ENCODE measurements at regions of chr19 and their contacts with region 1.

Region 1: DNA sequence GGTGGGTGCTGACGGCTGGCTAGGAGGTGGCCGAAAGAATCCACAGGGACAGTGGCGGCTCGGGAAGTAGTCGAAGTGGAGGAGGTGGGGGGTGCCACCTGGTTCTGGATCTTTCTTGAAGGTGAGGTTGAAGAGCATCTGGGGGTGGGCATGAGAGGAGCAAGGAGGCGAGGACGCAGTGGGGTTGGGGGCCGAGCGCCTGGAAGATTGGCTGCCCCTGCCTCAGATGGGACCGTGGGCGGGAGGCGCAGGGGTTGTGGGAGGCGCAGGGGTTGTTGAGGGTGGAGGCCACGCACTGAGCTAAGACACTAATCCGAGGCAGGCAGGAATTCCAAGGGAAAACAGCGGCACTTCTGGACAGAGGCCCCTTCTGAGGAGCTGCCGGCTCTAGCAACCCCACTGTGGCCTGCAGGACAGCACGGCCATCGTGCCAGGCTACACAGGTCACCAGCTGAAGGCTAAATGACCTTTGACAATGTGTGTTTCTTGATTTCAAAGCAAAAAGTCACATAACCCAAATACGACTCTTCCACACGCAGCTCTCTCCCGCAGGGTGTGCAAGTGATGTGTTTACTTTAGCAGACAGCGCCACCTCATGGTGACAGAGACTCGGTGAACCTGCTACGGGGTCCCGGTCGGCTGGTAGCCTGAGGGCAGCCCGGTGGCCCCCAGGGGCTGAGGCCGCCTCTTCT is 44.1 kb upstream of the RANBP3 start:
- DNase-seq: peak; percentile 70 to 83
- ATAC-seq: peak; percentile 87 to 95 (median 90)
- H3K4me3 ChIP-seq: no peak overlapping the region
- H3K27ac ChIP-seq: peak overlapping the region in 2 of 10 donors; percentile 26 to 43
- H3K4me1 ChIP-seq: peaks cover 0 to 17% (median 3%) of the 10 kb centered on the region in 9 donors
- H3K27me3 ChIP-seq: no peaks in the 10 kb centered on the region
- CTCF ChIP-seq: peak; percentile 48 to 86 (median 84)

Region 2: DNA sequence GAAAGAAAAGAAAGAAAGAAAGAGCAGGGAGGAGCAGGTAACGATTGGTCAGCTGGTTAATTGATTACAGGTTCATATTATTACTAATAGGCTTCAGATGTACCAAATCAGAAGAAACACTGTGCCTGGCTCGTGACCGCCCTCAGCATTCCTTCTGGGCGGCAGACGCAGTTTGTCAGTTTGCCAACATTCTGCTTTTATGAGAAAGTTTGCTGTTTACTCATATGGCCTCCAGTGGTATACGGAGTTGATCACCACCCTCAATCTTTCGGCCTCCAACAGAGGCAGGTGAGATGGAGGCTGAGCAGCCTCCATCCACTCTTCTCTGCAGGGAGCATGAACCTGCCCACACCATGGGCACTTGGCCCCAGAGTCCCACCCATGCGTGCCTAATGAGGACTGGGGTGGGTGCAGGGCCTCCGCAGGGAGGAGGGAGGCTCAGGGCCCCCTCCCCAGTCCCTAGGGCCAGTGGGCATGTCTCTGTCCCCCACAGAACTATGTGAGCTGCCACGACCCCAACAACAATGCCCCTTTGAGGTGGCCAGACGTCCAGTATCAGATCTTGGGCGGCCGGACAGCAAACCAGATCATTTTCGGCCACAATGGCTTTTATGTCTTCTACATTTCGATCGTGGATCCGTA is 246.2 kb before region 1 on chr19:
- intact Hi-C with region 1: loop called in 3 of 10 experiments (anchors 5 to 10 kb)
- DNase-seq: no peak
- ATAC-seq: no peak
- H3K4me3 ChIP-seq: no peak overlapping the region
- H3K27ac ChIP-seq: no peak overlapping the region
- H3K4me1 ChIP-seq: no peaks in the 10 kb centered on the region
- H3K27me3 ChIP-seq: peaks cover 0 to 7% (median 0%) of the 10 kb centered on the region in 7 donors
- CTCF ChIP-seq: no peak

Region 3: DNA sequence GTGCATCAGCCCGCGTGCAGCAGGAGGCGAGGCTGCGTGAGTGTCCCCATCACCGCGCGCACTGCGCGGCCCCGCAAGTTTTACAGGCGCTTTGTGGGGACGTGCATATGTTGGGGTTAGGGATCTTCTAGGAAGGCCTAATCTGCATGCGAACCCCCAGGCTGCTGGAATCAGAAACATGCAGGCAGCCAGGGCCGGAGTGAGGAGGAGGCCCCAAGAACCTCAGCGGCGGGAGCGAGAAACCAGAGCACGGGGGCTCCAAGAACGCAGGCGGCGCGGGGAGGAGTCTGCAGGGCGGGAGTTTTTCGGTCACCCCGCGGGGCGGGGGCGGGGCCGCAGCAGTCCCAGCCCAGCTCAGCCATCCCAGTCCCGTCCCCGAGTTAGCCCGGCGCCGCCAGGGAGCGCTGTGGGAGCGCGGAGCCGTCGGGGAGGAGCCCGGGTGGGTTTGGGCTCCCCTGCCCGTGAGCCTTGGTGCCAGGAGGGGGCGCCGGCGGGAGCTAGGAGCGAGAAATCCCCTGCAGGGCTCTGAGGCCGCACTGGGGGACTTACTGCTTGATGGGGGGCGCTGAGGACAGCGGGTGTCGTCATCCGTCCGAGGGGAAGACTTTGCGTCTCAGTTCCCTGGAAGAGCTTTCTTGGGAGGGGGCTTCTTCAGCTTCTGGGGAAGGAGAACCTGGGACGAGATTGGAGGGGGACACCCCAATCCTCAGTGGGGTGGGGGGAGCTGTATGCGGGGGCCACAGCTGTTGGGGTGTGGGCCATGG is 218.1 kb before region 1 on chr19:
- intact Hi-C with region 1: loop called in 7 of 10 experiments (anchors 2 to 10 kb)
- DNase-seq: peak; percentile 85 to 88
- ATAC-seq: peak; percentile 79 to 94 (median 88)
- H3K4me3 ChIP-seq: peak overlapping the region in 8 of 10 donors; percentile 11 to 49 (median 35)
- H3K27ac ChIP-seq: no peak overlapping the region
- H3K4me1 ChIP-seq: peaks cover 3 to 47% (median 14%) of the 10 kb centered on the region in 9 donors
- H3K27me3 ChIP-seq: peaks cover 0 to 75% (median 46%) of the 10 kb centered on the region in 7 donors
- CTCF ChIP-seq: peak; percentile 64 to 95 (median 86)

Region 4: DNA sequence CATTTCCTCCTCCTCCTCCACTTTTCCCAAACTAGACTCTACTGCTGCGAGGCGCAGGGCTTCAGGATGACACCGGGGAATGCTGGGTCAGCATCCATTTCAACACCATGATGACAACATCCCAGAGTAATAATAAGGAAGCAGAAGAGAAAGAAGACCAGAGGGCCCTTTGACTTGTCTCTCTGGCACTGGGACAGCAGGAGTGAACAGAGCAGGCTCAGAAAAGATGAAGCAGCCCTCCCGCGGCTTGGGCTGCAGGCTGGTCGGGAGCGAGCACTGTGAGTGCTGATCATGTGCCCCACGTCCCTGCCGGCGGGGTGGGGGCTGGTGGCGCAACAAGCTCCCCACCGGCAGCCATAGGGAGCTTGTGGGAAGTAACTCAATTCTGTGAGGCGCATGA is 74.6 kb before region 1 on chr19:
- intact Hi-C with region 1: no loop called
- DNase-seq: peak; percentile 46 to 61
- ATAC-seq: peak; percentile 9 to 73 (median 44)
- H3K4me3 ChIP-seq: peak overlapping the region in 4 of 10 donors; percentile 10 to 33 (median 21)
- H3K27ac ChIP-seq: peak overlapping the region in 9 of 10 donors; percentile 15 to 89 (median 59)
- H3K4me1 ChIP-seq: peaks cover 32 to 82% (median 74%) of the 10 kb centered on the region in 9 donors
- H3K27me3 ChIP-seq: no peaks in the 10 kb centered on the region
- CTCF ChIP-seq: no peak

Region 5: DNA sequence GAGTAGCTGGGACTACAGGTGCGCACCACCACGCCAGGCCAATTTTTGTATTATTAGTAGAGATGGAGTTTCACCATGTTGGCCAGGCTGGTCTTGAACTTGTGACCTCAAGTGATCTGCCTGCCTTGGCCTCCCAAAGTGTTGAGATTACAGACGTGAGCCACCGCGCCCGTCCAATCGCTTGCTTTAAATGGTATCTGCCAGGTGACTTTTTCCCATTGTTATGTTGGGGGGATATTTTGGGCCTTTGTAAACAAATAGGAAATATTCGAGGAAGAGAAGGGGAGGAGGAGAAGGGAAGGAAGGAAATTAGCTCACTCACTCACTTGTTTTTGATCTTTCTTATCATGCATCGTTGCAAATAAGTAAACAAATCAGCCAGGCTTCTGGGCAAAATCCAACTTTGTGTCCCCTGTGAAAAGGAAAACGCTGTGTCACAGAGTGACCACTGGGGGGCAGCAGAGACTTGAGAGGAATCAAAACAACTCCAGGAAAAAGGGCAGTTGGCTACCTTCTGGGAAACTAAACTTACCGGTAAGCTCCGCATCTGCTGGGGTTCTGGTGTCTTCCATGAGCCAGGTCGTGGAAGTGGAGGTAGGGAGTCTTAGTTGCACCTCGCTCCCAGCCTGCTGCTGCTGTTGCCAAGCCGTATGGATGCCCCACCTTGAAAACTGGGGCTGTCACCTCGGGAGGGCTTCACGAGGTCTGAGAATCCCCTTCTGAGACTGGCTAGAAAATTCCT is 34.8 kb before region 1 on chr19:
- intact Hi-C with region 1: loop called (anchors 1 to 5 kb)
- DNase-seq: peak in 1 of 2 donors; percentile 83
- ATAC-seq: peak in 7 of 8 donors; percentile 32 to 74 (median 54)
- H3K4me3 ChIP-seq: peak overlapping the region in 9 of 10 donors; percentile 8 to 52 (median 41)
- H3K27ac ChIP-seq: peak overlapping the region in 1 of 10 donors; percentile 28
- H3K4me1 ChIP-seq: peaks cover 0 to 27% (median 8%) of the 10 kb centered on the region in 9 donors
- H3K27me3 ChIP-seq: no peaks in the 10 kb centered on the region
- CTCF ChIP-seq: peak; percentile 89 to 97 (median 95)